ENCODE measurements at regions of chr1 and their contacts with region 1.

Region 1: DNA sequence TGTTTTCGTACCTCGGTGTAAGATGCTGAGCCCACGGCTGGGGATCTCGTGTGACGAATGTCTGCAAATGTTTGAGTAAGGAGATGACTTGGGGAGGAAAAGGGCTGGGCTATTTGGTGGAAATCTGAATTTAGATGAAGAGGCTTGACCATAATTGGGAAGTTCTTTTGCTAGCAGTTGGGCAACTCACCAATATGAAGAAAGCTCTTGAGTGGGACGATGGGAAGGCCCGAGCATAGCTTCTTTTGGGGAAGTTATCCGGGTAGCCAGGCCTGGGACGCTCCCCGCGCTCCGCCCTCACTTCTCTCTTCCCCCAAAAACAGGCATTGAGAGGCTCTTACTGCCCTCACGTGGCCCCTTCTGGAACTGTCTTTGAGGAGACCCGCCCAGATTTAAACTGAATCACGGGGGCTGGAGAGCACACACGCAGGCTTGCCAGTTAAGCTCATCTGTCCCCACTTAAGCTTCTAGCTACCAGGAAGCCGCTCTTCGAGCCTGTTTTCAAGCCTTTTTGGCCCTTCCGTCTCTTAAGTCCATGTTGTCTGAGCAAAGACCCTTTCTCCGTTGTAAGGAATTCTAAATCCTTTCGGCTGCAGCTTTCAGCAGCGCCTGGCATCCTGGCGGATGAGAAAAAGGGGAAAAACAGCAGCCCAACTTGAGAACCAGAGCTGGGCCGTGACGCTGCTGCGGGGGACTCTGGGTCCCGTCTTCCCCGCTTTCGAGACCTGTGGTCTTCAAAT is 93.1 kb downstream of the NID1 start:
- DNase-seq: peak; percentile 88
- CTCF ChIP-seq: peak; percentile 83

Region 2: DNA sequence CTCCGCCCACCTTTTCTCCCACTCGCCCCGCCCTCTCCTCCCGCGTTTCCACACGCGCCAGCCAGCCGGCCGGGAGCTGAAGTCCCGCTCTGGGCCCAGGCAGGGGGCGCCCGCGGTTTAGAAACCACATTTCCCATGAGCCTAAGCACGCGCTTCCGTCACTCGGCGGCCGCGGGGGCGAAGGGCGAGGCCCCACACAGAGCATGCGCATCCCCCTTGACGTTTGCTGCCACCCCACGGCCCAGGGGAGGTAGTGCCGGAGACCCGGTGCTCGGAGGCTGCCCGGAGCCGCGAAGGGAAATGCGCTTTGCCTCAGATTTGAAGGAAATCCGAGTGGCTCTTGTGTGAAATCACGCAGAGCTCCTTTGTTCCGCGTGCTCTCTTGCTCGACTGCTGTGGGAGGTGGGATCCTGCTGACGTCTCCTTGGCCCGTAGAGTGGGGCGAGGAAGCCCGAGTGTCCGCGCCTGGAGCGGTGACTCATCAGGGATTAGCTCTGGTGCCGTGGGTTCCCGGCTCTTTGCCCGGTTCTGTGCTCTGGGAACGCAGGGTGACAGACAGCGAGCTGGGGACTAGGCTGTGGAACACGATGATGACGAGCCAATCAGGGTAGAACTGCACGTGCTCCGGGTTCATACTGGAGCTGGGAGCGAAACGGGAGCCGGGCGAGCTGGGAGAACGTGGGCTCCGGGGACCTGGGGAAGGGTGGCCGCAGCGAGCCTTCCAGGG is 467.1 kb before region 1 on chr1:
- CTCF ChIA-PET with region 1: interaction called, 18 read pairs
- POLR2A ChIA-PET with region 1: no interaction called
- DNase-seq: peak; percentile 97
- CTCF ChIP-seq: peak; percentile 66

Region 3: DNA sequence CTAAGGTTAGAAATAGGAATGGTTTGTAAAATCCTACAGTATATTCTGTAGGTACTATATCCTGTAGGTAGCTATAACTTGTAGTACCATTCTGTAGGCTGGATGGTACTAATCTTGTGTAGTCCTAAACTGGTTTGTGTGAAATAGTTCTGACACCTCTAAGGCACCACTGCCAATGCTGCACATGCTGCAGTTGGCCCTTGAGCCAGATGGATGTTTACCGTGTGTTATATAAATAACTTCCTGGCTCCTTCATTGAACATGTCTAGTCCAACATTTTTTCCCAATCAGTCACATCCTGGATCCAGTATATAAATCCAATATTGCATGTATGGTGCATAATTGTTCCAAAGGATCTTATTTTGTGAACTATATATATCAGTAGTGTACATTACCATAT is 232.6 kb before region 1 on chr1:
- CTCF ChIA-PET with region 1: no interaction called
- POLR2A ChIA-PET with region 1: no interaction called
- DNase-seq: no peak
- CTCF ChIP-seq: no peak

Region 4: GRCh38 chr1:235843461-235843961 is 128.2 kb before region 1 on chr1:
- CTCF ChIA-PET with region 1: interaction called, 42 read pairs
- POLR2A ChIA-PET with region 1: no interaction called
- DNase-seq: peak; percentile 34
- CTCF ChIP-seq: peak; percentile 73

Region 5: GRCh38 chr1:235938709-235939479 is 32.8 kb before region 1 on chr1:
- CTCF ChIA-PET with region 1: interaction called, 12 read pairs
- POLR2A ChIA-PET with region 1: no interaction called
- DNase-seq: peak; percentile 49
- CTCF ChIP-seq: no peak

Region 6: DNA sequence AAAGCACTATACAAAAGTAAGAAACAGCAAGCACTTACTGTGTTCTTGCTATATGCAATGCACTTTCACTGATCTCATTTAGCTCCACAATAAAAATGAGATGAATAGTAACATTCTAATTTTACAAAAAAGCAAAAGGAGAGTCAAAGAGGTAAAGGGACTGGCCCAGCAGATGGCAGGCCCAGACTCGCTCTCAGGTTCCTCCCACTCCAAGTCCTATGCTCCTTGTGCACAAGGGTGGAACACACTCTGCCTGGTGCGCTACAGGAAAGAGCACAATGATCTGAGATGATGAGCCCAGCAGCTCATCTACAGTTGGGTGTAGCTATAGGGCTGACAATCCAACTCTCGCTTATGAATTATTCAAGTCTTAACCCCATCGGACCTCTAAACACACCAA is 10.9 kb before region 1 on chr1:
- CTCF ChIA-PET with region 1: interaction called, 85 read pairs
- POLR2A ChIA-PET with region 1: no interaction called
- DNase-seq: no peak
- CTCF ChIP-seq: no peak

Region 7: GRCh38 chr1:236064674-236065508 is 93.2 kb after region 1 on chr1 and contains the start of gene NID1:
- CTCF ChIA-PET with region 1: interaction called, 11 read pairs
- POLR2A ChIA-PET with region 1: no interaction called
- DNase-seq: peak; percentile 56
- CTCF ChIP-seq: peak; percentile 36

Region 8: GRCh38 chr1:236075848-236076247 is 104.1 kb after region 1 on chr1:
- CTCF ChIA-PET with region 1: no interaction called
- POLR2A ChIA-PET with region 1: no interaction called
- DNase-seq: no peak
- CTCF ChIP-seq: no peak

Measured in GM10248 (cell line).